ENCODE measurements at regions of chrX and their contacts with region 1.

Region 1: DNA sequence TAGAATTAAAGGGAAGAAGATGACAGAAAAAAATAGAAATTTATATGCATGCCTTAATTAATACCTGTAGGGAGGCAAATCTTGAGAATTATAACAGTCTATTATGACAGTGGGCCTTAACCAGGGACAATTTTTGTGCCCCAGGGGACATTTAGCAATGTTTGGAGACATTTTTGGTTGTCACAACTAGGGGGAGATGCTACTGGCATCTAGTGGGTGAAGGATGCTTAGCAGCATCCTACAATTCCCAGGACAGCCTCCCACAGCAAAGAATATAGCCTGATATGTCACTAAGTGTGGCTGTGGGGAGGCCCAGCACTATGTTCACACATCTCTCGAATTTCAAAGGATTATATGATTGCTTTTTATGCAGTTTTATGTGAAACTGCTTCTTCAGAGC is 10.5 kb downstream of the GPR82 start:
- DNase-seq: peak; percentile 9
- H3K4me3 Mint-ChIP-seq: no peak overlapping the region
- H3K27ac Mint-ChIP-seq: peak overlapping the region; percentile 79
- H3K4me1 Mint-ChIP-seq: peaks cover 29% of the 10 kb centered on the region
- H3K27me3 Mint-ChIP-seq: no peaks in the 10 kb centered on the region

Region 2: DNA sequence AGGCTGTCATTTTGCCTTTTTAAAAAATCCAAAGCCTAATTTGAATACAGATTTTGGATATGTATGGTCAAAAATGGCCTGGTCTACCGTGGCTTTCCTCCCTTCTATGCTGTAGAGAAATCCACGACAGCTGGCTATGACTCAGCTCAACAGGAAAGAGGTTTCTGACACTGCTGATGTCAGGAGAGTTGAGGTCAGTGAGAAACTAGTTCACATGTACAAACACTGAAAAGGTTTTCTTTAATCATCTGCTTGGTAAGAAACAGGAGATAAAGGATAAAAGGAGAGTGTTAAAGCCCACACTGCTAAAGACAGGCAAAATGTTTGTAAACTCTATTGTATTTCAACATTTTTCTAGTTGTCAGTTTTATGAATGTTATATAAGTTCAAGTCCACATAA is 173.5 kb before region 1 on chrX:
- CTCF ChIA-PET with region 1: no interaction called
- POLR2A ChIA-PET with region 1: no interaction called
- intact Hi-C with region 1: loop called (anchors 1 kb)
- DNase-seq: peak; percentile 52
- H3K4me3 Mint-ChIP-seq: no peak overlapping the region
- H3K27ac Mint-ChIP-seq: peak overlapping the region; percentile 62
- H3K4me1 Mint-ChIP-seq: peaks cover 44% of the 10 kb centered on the region
- H3K27me3 Mint-ChIP-seq: no peaks in the 10 kb centered on the region

Region 3: GRCh38 chrX:41672643-41673042 is 61.9 kb before region 1 on chrX:
- CTCF ChIA-PET with region 1: no interaction called
- POLR2A ChIA-PET with region 1: no interaction called
- intact Hi-C with region 1: loop called (anchors 1 kb)
- DNase-seq: no peak
- H3K4me3 Mint-ChIP-seq: no peak overlapping the region
- H3K27ac Mint-ChIP-seq: no peak overlapping the region
- H3K4me1 Mint-ChIP-seq: peaks cover 44% of the 10 kb centered on the region
- H3K27me3 Mint-ChIP-seq: no peaks in the 10 kb centered on the region

Region 4: GRCh38 chrX:41711021-41711667 is 23.4 kb before region 1 on chrX:
- CTCF ChIA-PET with region 1: no interaction called
- POLR2A ChIA-PET with region 1: no interaction called
- intact Hi-C with region 1: loop called (anchors 1 kb)
- DNase-seq: peak; percentile 14
- H3K4me3 Mint-ChIP-seq: no peak overlapping the region
- H3K27ac Mint-ChIP-seq: no peak overlapping the region
- H3K4me1 Mint-ChIP-seq: peaks cover 34% of the 10 kb centered on the region
- H3K27me3 Mint-ChIP-seq: no peaks in the 10 kb centered on the region

Region 5: DNA sequence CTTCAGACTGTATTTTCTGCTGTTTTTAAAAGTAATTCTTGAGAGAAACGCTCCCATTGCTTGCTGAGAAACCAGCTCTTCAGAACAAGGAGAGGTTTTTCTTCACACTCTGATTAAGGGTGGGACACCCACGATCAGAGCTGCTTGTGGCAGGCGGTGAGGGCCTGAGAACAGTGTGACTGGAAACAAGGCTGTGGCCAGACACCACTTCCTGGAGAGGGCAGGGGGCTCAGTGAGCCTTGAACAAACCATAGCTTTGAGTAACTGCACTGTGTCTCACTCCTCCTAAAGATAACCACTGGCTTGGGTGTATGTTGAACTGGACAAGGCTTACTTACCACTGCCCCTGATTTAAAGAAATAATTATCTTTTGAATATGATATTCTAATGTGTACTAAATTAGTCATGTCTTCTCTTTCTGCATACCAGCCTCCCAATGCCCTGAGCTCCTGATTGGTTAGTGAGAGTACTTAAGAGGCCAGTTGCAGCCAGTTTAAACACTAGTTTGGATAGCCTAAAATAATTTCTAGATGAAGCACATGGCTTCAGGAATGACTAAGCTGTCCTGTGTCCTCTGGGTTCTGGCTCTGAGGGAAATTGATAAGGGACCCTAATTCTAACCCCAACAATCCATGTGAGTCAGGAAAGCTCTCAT is 14.3 kb before region 1 on chrX:
- CTCF ChIA-PET with region 1: no interaction called
- POLR2A ChIA-PET with region 1: no interaction called
- intact Hi-C with region 1: loop called (anchors 1 kb)
- DNase-seq: peak; percentile 72
- H3K4me3 Mint-ChIP-seq: no peak overlapping the region
- H3K27ac Mint-ChIP-seq: peak overlapping the region; percentile 30
- H3K4me1 Mint-ChIP-seq: peaks cover 59% of the 10 kb centered on the region
- H3K27me3 Mint-ChIP-seq: no peaks in the 10 kb centered on the region